ENCODE measurements at regions of chr4 and their contacts with region 1.

Region 1: GRCh38 chr4:139861471-139861870 is 195.9 kb downstream of the MGST2 start:
- DNase-seq: no peak
- H3K4me3 ChIP-seq: no peak overlapping the region
- H3K27ac ChIP-seq: no peak overlapping the region
- H3K4me1 ChIP-seq: no peaks in the 10 kb centered on the region
- H3K27me3 ChIP-seq: no peaks in the 10 kb centered on the region
- CTCF ChIP-seq: no peak

Region 2: DNA sequence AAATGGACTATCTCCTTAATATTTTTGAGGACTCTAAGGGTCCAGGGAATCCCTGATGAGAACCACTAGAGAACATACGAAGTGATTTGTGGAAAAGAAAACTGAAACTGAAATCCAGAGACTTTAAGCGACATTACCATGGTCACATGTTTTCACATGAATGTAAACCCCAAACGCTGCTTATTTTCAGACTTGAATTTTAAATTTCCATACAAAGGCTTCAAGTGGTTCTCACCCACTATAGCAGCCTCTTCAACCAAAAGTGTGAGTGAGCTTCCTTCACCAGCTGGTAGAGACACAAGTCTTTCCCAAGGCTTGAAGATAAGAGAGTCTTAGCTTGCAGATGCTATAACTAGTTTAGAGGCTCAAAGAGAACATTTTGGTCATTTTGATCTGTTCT is 36.8 kb after region 1 on chr4:
- CTCF ChIA-PET with region 1: no interaction called
- dilution Hi-C with region 1: loop called (anchors 5 kb)
- in situ Hi-C with region 1: no loop called
- intact Hi-C with region 1: no loop called
- DNase-seq: no peak
- H3K4me3 ChIP-seq: no peak overlapping the region
- H3K27ac ChIP-seq: no peak overlapping the region
- H3K4me1 ChIP-seq: peaks cover 16% of the 10 kb centered on the region
- H3K27me3 ChIP-seq: no peaks in the 10 kb centered on the region
- CTCF ChIP-seq: no peak